Esophagus squamous epithelium (tissue), 5 donors: ENCODE measurements at regions of chr2 and their contacts with region 1.

Region 1: DNA sequence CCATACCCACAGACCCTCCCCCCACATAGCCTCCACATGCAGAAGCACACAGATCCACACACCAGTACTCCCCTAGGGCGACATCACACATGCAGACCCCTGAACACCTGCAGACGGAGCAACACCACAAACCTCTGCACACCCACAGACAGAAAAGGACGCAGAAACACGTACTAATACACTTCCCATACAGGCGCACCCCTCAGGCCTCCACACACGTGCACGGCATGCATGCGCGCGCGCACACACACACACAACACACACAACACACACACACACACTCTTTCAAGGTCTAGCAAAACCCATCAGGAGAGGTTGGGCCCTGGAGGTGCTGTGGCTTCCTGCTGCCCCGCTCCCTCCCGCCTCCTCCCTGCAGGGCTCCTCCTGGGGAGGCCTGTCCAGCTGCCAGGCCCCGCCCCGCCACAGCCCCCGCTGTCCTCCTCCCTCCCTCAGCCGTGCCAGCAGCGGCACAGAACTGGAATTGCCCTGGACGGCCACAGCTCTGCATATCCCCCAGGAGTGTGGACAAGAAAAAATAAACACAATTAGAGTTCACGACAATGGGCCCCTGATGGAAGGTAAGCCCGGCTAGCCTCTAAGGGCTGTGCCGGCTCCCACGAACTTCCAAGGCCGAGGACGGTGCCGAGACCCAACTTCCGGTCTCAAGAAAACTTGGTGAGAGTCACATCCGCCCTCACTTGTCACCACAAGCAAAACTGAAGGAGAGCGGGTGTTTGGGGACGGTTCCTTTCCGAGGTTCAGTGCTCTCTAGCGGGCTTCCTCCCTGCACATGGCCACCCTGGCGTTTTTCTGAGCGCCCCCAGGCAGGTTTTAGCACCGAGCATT is 6.8 kb downstream of the ZFP36L2 start:
- DNase-seq: peak; percentile 65
- H3K4me3 ChIP-seq: peak overlapping the region; percentile 26 to 92 (median 86)
- H3K27ac ChIP-seq: peak overlapping the region; percentile 96 to 100 (median 98)
- H3K4me1 ChIP-seq: peaks cover 41 to 72% (median 43%) of the 10 kb centered on the region in 3 donors
- H3K27me3 ChIP-seq: no peaks in the 10 kb centered on the region
- CTCF ChIP-seq: peak in 1 of 6 experiments; percentile 19
- POLR2A ChIP-seq: peak in 2 of 4 donors; percentile 65 to 73

Region 2: GRCh38 chr2:43047190-43047780 is 172.3 kb before region 1 on chr2:
- intact Hi-C with region 1: no loop called
- DNase-seq: no peak
- H3K4me3 ChIP-seq: no peak overlapping the region
- H3K27ac ChIP-seq: no peak overlapping the region
- H3K4me1 ChIP-seq: peaks cover 4 to 42% (median 5%) of the 10 kb centered on the region in 3 donors
- H3K27me3 ChIP-seq: no peaks in the 10 kb centered on the region
- CTCF ChIP-seq: no peak
- POLR2A ChIP-seq: no peak

Region 3: GRCh38 chr2:43059183-43059897 is 160.3 kb before region 1 on chr2:
- intact Hi-C with region 1: no loop called
- DNase-seq: no peak
- H3K4me3 ChIP-seq: no peak overlapping the region
- H3K27ac ChIP-seq: peak overlapping the region in 3 of 4 donors; percentile 41 to 44 (median 42)
- H3K4me1 ChIP-seq: peaks cover 5 to 27% (median 10%) of the 10 kb centered on the region in 3 donors
- H3K27me3 ChIP-seq: no peaks in the 10 kb centered on the region
- CTCF ChIP-seq: no peak
- POLR2A ChIP-seq: no peak

Region 4: GRCh38 chr2:43131024-43131889 is 88.3 kb before region 1 on chr2:
- intact Hi-C with region 1: loop called (anchors 5 kb)
- DNase-seq: peak; percentile 91
- H3K4me3 ChIP-seq: peak overlapping the region in 1 of 4 donors; percentile 15
- H3K27ac ChIP-seq: peak overlapping the region; percentile 76 to 90 (median 83)
- H3K4me1 ChIP-seq: peaks cover 43 to 93% (median 54%) of the 10 kb centered on the region in 3 donors
- H3K27me3 ChIP-seq: no peaks in the 10 kb centered on the region
- CTCF ChIP-seq: peak in 5 of 6 experiments; percentile 21 to 61 (median 44)
- POLR2A ChIP-seq: peak in 2 of 4 donors; percentile 4 to 65

Region 5: DNA sequence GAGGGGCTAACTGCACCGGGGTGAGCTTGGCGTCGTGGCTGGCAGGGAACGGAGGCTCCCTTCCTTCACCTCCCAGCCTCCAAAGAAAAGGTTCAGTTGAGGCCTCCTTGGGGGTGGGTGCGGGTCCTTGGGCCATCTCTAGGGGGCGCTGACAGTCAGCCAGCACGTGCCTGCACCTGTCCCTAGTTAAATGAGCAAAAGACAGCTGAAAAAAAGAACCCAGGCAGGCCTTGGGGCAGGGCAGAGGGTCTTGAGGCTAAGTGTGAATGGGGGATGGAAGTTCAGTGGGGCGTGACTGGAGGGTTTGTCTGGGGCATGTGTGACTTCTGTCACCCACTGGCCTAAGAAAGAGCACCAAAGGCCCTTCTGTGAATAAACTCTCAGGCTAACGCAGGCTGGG is 49.6 kb before region 1 on chr2:
- intact Hi-C with region 1: loop called (anchors 10 kb)
- DNase-seq: no peak
- H3K4me3 ChIP-seq: peak overlapping the region in 1 of 4 donors; percentile 17
- H3K27ac ChIP-seq: peak overlapping the region; percentile 85 to 91 (median 88)
- H3K4me1 ChIP-seq: peaks cover 28 to 64% (median 31%) of the 10 kb centered on the region in 3 donors
- H3K27me3 ChIP-seq: no peaks in the 10 kb centered on the region
- CTCF ChIP-seq: peak in 5 of 6 experiments; percentile 49 to 78 (median 56)
- POLR2A ChIP-seq: no peak